GM18951 (cell line): ENCODE measurements at regions of chr5 and their contacts with region 1.

Region 1: GRCh38 chr5:171484460-171484899 is 65.0 kb downstream of the FGF18 start:
- POLR2A ChIP-seq: no peak

Region 2: GRCh38 chr5:171850324-171851285 is 366.1 kb after region 1 on chr5:
- in situ Hi-C with region 1: no loop called
- POLR2A ChIP-seq: no peak

Region 3: GRCh38 chr5:171907725-171908343 is 423.4 kb after region 1 on chr5:
- in situ Hi-C with region 1: loop called (anchors 10 kb)
- POLR2A ChIP-seq: no peak

Region 4: DNA sequence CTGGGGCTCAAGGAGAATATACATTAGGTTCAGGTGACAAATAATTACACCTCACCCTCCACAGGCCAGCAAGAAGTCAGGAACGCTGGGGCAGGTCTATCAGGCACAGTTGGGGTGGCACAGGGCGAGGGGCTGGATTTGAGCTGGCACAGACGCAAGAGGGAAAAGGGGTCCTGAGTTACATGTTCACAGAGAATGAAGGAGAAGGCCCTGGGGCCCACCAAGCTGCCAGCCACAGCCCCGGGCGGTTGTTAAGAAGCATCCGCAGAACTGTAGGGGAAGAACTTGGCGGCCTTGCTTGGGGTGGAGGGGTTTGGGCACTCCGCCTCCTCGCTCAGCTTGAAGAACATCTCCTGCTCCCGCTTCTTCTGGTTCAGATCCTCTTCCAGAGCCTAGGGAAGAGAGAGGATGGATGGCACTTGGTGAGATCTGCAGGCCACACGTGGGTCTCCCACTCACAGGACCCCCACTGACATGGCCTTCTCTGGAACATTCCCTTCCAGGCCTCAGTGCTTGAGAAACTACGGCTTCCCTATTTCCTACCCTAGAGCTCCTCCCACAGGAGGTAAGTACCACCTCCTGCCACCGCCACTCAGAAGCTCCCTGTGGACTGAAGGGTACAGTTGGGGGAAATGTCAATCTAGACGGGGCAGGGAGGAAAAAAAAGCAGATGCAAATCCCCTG is 560.3 kb after region 1 on chr5:
- in situ Hi-C with region 1: no loop called
- POLR2A ChIP-seq: no peak